ENCODE measurements at regions of chr6 and their contacts with region 1.

Region 1: GRCh38 chr6:49856282-49856681 is 10.1 kb downstream of the CRISP1 start:
- DNase-seq: no peak
- ATAC-seq: no peak
- H3K4me3 ChIP-seq: no peak overlapping the region
- H3K27ac ChIP-seq: no peak overlapping the region
- H3K4me1 ChIP-seq: no peaks in the 10 kb centered on the region
- H3K27me3 ChIP-seq: no peaks in the 10 kb centered on the region

Region 2: GRCh38 chr6:49401063-49401462 is 455.2 kb before region 1 on chr6:
- intact Hi-C with region 1: no loop called
- DNase-seq: no peak
- ATAC-seq: no peak
- H3K4me3 ChIP-seq: no peak overlapping the region
- H3K27ac ChIP-seq: no peak overlapping the region
- H3K4me1 ChIP-seq: no peaks in the 10 kb centered on the region
- H3K27me3 ChIP-seq: no peaks in the 10 kb centered on the region

Region 3: DNA sequence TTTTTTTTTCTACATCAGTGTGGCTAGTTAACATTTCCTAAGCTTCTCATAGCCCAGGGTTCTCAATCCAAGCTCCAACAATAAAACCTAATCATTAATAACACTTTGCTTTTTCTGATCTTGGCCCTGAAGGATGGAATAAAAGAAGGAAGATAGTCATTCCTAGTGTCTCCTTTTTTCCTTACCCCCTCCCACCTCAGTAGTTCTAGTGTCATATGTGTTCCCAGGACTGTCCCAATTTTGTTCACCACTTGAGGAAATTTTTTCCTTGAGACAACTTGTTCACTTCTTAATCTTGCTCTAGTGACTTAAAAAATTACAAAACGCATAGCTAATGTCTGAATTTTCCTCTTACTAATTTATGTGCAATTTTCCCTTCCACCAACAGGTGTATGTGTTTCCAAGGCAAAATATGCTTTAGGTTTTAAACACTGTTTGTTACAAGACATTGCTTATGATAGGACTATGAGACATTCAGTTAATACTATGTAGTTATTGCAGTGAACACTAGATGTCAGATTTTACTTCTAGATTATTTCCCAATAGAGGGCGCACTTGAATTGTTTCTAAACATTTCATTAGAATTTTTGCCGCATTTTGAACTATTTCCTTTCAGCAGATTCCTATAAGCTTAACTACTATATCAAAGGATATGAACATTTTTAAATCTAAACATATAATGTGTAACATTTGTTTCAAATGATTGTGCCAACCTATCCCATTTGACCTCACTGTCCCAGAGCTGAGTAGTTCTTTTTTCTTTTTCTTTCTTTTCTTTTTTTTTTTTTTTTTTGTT is 324.3 kb before region 1 on chr6:
- intact Hi-C with region 1: loop called in 1 of 4 experiments (anchors 10 kb)
- DNase-seq: no peak
- ATAC-seq: peak; percentile 62 to 69
- H3K4me3 ChIP-seq: no peak overlapping the region
- H3K27ac ChIP-seq: no peak overlapping the region
- H3K4me1 ChIP-seq: no peaks in the 10 kb centered on the region
- H3K27me3 ChIP-seq: no peaks in the 10 kb centered on the region

Region 4: GRCh38 chr6:49606696-49607390 is 249.4 kb before region 1 on chr6:
- intact Hi-C with region 1: no loop called
- DNase-seq: peak in 2 of 3 donors; percentile 13 to 42
- ATAC-seq: peak in 1 of 2 donors; percentile 69
- H3K4me3 ChIP-seq: no peak overlapping the region
- H3K27ac ChIP-seq: no peak overlapping the region
- H3K4me1 ChIP-seq: no peaks in the 10 kb centered on the region
- H3K27me3 ChIP-seq: no peaks in the 10 kb centered on the region

Region 5: GRCh38 chr6:49625140-49625539 is 231.1 kb before region 1 on chr6:
- intact Hi-C with region 1: loop called in 1 of 4 experiments (anchors 5 kb)
- DNase-seq: no peak
- ATAC-seq: no peak
- H3K4me3 ChIP-seq: no peak overlapping the region
- H3K27ac ChIP-seq: no peak overlapping the region
- H3K4me1 ChIP-seq: no peaks in the 10 kb centered on the region
- H3K27me3 ChIP-seq: no peaks in the 10 kb centered on the region

Region 6: GRCh38 chr6:49966334-49966733 is 110.1 kb after region 1 on chr6:
- intact Hi-C with region 1: no loop called
- DNase-seq: no peak
- ATAC-seq: no peak
- H3K4me3 ChIP-seq: no peak overlapping the region
- H3K27ac ChIP-seq: no peak overlapping the region
- H3K4me1 ChIP-seq: no peaks in the 10 kb centered on the region
- H3K27me3 ChIP-seq: no peaks in the 10 kb centered on the region

Region 7: GRCh38 chr6:49988900-49989299 is 132.6 kb after region 1 on chr6:
- intact Hi-C with region 1: no loop called
- DNase-seq: no peak
- ATAC-seq: no peak
- H3K4me3 ChIP-seq: no peak overlapping the region
- H3K27ac ChIP-seq: no peak overlapping the region
- H3K4me1 ChIP-seq: no peaks in the 10 kb centered on the region
- H3K27me3 ChIP-seq: no peaks in the 10 kb centered on the region